CD4-positive, alpha-beta T cell (primary cell): ENCODE measurements at regions of chr3 and their contacts with region 1.

Region 1: DNA sequence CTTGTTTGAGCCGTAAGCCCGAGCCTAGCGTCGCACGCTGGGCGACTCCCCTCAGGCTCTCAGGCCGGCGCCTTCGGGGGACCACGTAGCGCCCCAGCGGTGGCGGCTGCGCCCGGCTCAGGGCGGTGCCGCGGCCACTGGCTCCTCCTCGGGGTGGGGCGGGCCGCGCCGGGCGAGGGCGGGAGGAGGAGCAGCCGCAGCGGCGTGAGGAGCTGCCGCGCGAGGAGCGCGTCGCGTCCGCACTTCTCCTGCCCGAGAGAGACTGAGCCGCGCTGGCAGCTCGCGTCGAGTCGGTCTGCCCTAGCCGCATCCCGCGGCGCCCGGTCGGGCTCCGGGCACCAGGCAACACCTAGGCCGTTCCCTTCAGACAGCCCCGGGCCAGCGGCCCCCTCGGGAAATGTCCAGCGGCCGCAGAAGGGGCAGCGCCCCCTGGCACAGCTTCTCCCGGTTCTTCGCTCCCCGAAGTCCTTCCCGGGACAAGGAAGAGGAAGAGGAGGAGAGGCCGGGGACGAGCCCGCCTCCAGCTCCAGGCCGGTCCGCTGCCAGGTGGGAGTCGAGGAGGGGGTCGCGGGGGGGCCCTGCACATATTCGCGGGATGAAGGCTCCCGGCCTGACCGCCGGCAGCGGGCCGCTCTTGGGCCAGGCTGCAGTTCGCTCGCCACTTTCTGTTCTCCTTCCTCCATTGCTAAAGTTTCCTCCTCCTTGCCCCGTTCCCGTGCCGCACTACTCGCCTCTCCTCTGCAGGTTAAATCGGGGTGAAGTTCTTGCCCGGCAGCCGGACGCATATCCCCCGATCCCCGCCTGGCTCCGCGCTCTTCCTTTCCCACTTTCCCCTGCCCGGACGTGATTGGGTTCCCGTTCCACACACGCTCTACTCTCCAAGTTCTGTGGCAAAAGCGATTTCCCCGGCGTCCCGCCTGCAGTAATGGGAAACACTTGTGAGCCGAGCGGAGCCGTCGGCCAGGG is at the start of gene CRYBG3:
- DNase-seq: peak; percentile 60 to 91 (median 76)
- ATAC-seq: peak; percentile 96
- H3K4me3 ChIP-seq: peak within 1 kb of the TSS; percentile 81
- H3K4me3 Mint-ChIP-seq: peak within 1 kb of the TSS; percentile 97
- H3K27ac ChIP-seq: peak within 1 kb of the TSS in 1 of 2 donors; percentile 68
- H3K27ac Mint-ChIP-seq: peak within 1 kb of the TSS; percentile 78
- H3K4me1 ChIP-seq: peaks cover 25% of the 10 kb centered on the region
- H3K4me1 Mint-ChIP-seq: peaks cover 21% of the 10 kb centered on the region
- H3K27me3 ChIP-seq: no peaks in the 10 kb centered on the region
- H3K27me3 Mint-ChIP-seq: peaks cover 20% of the 10 kb centered on the region
- CTCF ChIP-seq: no peak
- total RNA-seq, gene CRYBG3: 2.2 to 2.4 TPM

Region 2: DNA sequence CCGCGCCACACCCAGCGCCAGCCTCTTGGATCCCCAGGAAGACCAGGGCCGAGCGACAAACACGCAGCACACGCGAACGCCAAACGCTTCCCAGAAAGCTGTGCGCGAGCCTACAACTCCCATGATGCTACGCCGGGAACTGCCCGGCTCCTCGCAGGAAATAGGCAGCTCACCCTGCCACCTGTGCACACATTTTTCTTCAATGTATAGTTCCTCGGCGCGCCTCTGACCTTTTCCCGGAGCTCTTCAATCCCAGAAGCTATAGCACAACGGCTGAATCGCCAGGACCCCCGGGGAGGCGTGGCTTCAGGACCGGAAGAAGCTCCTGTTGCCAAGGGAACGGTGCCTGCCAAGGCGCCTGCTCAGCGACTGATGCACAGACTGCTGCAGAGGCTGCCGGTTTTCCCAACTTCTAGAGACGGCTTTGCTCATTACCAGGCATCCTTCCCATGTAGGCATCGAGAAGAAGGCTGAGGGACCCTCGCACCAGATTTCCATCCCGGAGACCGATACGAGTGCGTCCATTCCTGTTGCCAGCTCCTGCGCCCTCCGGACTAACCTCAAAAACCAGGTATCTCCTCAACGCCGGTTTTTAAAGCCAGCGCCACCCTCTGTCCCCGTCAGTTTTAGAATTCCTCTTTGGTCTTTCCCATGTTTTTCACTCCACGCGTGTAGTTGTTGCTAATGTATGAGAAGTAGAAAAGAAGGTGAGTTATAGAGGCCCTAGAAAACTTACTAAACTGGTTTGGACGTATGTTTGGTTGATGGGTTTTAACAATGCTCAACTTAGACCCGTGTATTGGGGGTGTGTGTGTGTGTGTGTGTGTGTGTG is 57.5 kb before region 1 on chr3 and contains the start of gene ARL6:
- CTCF ChIA-PET with region 1: interaction called, 4 read pairs
- POLR2A ChIA-PET with region 1: interaction called, 3 read pairs
- intact Hi-C with region 1: loop called in 1 of 2 experiments (anchors 5 kb)
- DNase-seq: peak; percentile 38 to 85 (median 60)
- ATAC-seq: peak; percentile 91
- H3K4me3 ChIP-seq: peak within 1 kb of the TSS; percentile 87
- H3K4me3 Mint-ChIP-seq: peak within 1 kb of the TSS; percentile 96
- H3K27ac ChIP-seq: peak within 1 kb of the TSS; percentile 62 to 76
- H3K27ac Mint-ChIP-seq: peak within 1 kb of the TSS; percentile 87
- H3K4me1 ChIP-seq: peaks cover 9% of the 10 kb centered on the region
- H3K4me1 Mint-ChIP-seq: peaks cover 39% of the 10 kb centered on the region
- H3K27me3 ChIP-seq: no peaks in the 10 kb centered on the region
- H3K27me3 Mint-ChIP-seq: no peaks in the 10 kb centered on the region
- CTCF ChIP-seq: no peak
- total RNA-seq, gene ARL6: 1.3 to 2.1 TPM

Region 3: GRCh38 chr3:97910931-97911351 is 88.8 kb after region 1 on chr3:
- CTCF ChIA-PET with region 1: no interaction called
- POLR2A ChIA-PET with region 1: interaction called, 10 read pairs
- intact Hi-C with region 1: loop called in 1 of 2 experiments (anchors 5 kb)
- DNase-seq: peak in 4 of 14 experiments; percentile 6 to 78 (median 58)
- ATAC-seq: peak; percentile 83
- H3K4me3 ChIP-seq: no peak overlapping the region
- H3K4me3 Mint-ChIP-seq: peak overlapping the region; percentile 83
- H3K27ac ChIP-seq: peak overlapping the region in 1 of 2 donors; percentile 12
- H3K27ac Mint-ChIP-seq: peak overlapping the region; percentile 91
- H3K4me1 ChIP-seq: peaks cover 15% of the 10 kb centered on the region
- H3K4me1 Mint-ChIP-seq: peaks cover 41% of the 10 kb centered on the region
- H3K27me3 ChIP-seq: no peaks in the 10 kb centered on the region
- H3K27me3 Mint-ChIP-seq: no peaks in the 10 kb centered on the region
- CTCF ChIP-seq: no peak

Region 4: GRCh38 chr3:97932387-97932801 is 110.3 kb after region 1 on chr3:
- CTCF ChIA-PET with region 1: no interaction called
- POLR2A ChIA-PET with region 1: interaction called, 3 read pairs
- intact Hi-C with region 1: loop called in 1 of 2 experiments (anchors 10 kb)
- DNase-seq: no peak
- ATAC-seq: no peak
- H3K4me3 ChIP-seq: no peak overlapping the region
- H3K4me3 Mint-ChIP-seq: no peak overlapping the region
- H3K27ac ChIP-seq: no peak overlapping the region
- H3K27ac Mint-ChIP-seq: no peak overlapping the region
- H3K4me1 ChIP-seq: no peaks in the 10 kb centered on the region
- H3K4me1 Mint-ChIP-seq: no peaks in the 10 kb centered on the region
- H3K27me3 ChIP-seq: no peaks in the 10 kb centered on the region
- H3K27me3 Mint-ChIP-seq: no peaks in the 10 kb centered on the region
- CTCF ChIP-seq: no peak

Region 5: GRCh38 chr3:97952280-97952679 is 130.2 kb after region 1 on chr3:
- CTCF ChIA-PET with region 1: no interaction called
- POLR2A ChIA-PET with region 1: no interaction called
- intact Hi-C with region 1: no loop called
- DNase-seq: peak in 2 of 14 experiments; percentile 26 to 49
- ATAC-seq: no peak
- H3K4me3 ChIP-seq: no peak overlapping the region
- H3K4me3 Mint-ChIP-seq: no peak overlapping the region
- H3K27ac ChIP-seq: no peak overlapping the region
- H3K27ac Mint-ChIP-seq: no peak overlapping the region
- H3K4me1 ChIP-seq: no peaks in the 10 kb centered on the region
- H3K4me1 Mint-ChIP-seq: no peaks in the 10 kb centered on the region
- H3K27me3 ChIP-seq: no peaks in the 10 kb centered on the region
- H3K27me3 Mint-ChIP-seq: no peaks in the 10 kb centered on the region
- CTCF ChIP-seq: no peak

Region 6: DNA sequence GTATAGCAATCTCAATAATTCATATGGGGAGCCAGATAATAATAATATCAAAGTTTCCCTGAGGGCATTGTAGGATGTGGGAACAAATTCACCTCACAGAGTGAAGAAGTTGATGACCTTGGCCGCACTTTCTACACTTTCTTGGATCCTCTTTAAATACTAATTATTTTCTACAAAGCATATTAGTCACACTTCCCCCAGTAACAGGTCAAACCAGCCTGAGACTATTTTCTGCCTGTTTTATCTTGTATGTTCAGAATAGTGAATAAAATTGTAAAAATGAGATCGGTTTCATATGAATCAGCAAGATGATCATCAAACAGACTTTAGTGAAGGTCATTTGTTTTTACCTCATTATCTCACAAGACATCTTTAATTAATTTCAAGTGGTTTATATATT is 566.1 kb after region 1 on chr3:
- CTCF ChIA-PET with region 1: no interaction called
- POLR2A ChIA-PET with region 1: no interaction called
- intact Hi-C with region 1: no loop called
- DNase-seq: no peak
- ATAC-seq: no peak
- H3K4me3 ChIP-seq: no peak overlapping the region
- H3K4me3 Mint-ChIP-seq: no peak overlapping the region
- H3K27ac ChIP-seq: no peak overlapping the region
- H3K27ac Mint-ChIP-seq: no peak overlapping the region
- H3K4me1 ChIP-seq: no peaks in the 10 kb centered on the region
- H3K4me1 Mint-ChIP-seq: no peaks in the 10 kb centered on the region
- H3K27me3 ChIP-seq: peaks cover 0 to 7% of the 10 kb centered on the region in 2 experiments
- H3K27me3 Mint-ChIP-seq: peaks cover 26% of the 10 kb centered on the region
- CTCF ChIP-seq: no peak

Region 7: DNA sequence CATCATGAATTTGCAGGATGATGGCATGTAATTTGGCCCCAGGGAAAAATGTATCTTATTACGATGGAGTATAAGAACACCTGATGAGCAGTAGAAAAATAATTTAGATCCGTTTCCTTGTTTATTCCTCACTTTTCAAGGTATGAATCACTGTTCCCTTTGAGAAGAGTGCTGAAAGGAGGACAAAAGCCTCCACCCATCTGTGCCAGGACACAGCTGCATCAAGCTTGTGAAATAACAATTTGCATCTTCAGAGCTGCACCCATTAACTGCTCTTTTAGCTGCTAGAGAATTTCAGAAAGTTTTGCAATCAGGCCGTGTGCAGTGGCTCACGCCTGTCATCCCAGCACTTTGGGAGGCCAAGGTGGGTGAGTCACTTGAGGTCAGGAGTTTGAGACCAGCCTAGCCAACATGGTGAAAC is 691.0 kb after region 1 on chr3:
- CTCF ChIA-PET with region 1: no interaction called
- POLR2A ChIA-PET with region 1: no interaction called
- intact Hi-C with region 1: loop called in 1 of 2 experiments (anchors 5 kb)
- DNase-seq: no peak
- ATAC-seq: no peak
- H3K4me3 ChIP-seq: no peak overlapping the region
- H3K4me3 Mint-ChIP-seq: no peak overlapping the region
- H3K27ac ChIP-seq: no peak overlapping the region
- H3K27ac Mint-ChIP-seq: no peak overlapping the region
- H3K4me1 ChIP-seq: peaks cover 2% of the 10 kb centered on the region
- H3K4me1 Mint-ChIP-seq: peaks cover 31% of the 10 kb centered on the region
- H3K27me3 ChIP-seq: no peaks in the 10 kb centered on the region
- H3K27me3 Mint-ChIP-seq: no peaks in the 10 kb centered on the region
- CTCF ChIP-seq: no peak